Right ventricle myocardium inferior (tissue), 1 donor: ENCODE measurements at regions of chr2 and their contacts with region 1.

Region 1: DNA sequence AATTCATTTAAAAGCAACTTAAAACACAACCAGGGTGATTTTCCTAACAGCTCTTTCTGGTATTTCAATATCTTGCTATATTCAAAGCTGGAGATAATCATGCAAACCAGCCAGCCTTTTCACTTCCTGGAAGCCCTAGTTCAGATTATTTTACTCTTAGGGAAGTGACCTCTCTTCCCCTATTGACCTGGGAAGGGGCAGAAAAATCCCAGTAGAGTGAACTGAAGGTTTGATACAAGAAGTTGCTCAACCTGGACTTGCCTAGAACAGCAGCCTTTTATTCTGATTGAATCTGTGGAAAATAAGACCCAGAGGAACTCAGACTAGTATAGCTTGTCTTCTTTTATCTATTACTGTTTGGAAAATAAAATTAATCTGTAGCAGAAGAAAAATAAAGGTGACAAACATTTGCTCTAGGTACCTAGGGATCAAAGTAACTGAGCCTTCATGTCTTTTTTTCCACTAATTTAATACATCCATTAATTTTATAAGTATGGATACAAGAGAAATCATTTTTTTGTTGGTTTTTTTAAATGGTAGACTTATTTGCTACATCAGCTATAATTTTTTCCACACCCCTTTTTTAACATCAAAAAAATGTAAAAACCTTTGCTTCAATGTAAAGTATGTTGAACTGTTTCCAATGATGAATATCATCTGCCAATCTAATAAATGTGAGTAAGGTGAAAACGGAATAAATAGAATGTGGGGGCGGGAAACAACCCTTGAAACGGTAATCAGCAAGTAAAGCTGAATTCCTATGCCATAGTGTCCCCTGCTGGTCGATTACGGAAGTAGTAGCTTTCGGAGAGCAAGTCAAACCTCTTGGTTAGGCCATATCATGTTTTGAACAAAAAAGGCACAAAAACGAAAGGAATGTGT is 629.9 kb downstream of the NRXN1 start:
- DNase-seq: no peak
- ATAC-seq: no peak

Region 2: DNA sequence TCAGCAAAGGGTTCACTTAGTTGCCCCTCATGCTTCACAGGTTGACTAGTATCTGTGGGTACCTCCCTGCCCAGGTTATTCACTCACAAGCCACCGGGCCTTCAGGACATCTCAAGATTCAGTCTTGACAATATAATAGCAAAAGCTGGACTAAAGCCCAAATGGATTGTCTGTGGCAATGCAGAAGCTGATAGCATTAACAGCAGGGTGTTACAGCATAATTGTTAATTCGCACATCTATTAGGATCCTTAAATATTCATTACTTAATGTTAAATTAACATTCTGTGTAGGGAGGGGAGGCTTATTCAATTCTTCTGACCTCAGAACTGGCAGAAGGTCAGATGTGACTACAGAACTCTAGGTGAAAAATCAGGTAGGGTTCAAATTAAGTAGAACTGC is 1804.5 kb before region 1 on chr2:
- intact Hi-C with region 1: loop called (anchors 5 kb)
- DNase-seq: no peak
- ATAC-seq: no peak

Region 3: DNA sequence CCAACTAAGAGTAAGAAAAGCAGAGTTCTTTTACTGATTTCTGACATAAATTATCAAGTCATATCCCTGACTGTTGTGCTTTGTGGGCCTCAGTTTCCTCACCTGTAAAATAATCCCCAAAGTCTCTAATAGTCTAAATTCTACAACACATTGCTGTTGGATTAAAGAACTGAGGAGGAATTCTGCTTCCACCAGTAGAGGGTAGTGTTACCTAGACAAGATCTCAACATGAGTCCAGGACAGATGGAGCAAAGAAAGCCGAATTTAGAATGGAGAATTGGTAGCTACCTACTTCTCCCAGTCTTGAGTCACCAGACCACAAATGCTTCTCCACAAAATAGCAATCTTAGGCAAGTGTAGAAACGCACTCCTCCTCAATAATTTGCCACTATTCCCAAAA is 785.2 kb before region 1 on chr2:
- intact Hi-C with region 1: loop called (anchors 5 kb)
- DNase-seq: no peak
- ATAC-seq: no peak